Activated B cell treated with CpG ODN at 0.5 μM for 24 hours (primary cell): ENCODE measurements at regions of chr12 and their contacts with region 1.

Region 1: DNA sequence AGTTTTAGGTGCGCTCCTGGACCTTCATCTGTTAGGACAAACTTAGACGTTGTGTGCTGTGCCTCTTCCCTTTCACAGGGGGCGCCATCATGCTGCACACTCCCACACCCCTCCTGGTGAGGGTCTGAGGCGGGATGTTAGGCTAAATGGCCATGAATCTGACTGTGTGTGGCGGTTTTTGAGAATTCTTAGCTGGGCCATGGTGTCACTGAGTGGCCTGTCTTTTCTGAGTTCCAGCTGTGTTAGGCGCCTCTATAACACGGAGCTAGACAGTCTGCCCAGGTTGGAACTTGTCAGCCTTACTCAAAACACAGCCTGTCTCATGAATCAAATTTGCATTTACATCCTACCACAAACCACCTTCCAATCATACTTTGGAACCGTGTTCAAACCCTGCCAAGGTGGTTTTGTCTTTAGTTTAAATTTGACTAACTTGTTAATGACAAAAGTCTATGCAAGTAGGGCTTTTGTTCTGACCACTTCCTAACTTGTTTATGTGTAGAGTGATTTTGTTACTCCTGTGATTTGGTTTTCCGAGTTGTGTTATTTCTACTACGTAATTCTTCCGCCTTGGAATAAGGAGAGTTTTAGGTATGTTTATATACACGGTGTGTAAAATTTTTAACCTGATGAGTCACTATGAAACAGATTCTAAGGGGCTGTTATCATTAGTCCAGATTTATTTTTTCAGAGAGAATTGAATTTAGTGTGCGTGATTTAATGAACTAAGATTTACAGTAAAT is 19.6 kb downstream of the ACVR1B start:
- DNase-seq: peak; percentile 23
- ATAC-seq: peak; percentile 85
- H3K4me3 Mint-ChIP-seq: peak overlapping the region; percentile 69
- H3K27ac Mint-ChIP-seq: peak overlapping the region; percentile 63
- H3K4me1 Mint-ChIP-seq: peaks cover 54% of the 10 kb centered on the region
- H3K27me3 Mint-ChIP-seq: no peaks in the 10 kb centered on the region
- CTCF ChIP-seq: no peak

Region 2: GRCh38 chr12:51056244-51056643 is 914.8 kb before region 1 on chr12:
- CTCF ChIA-PET with region 1: no interaction called
- POLR2A ChIA-PET with region 1: no interaction called
- intact Hi-C with region 1: no loop called
- DNase-seq: no peak
- ATAC-seq: no peak
- H3K4me3 Mint-ChIP-seq: no peak overlapping the region
- H3K27ac Mint-ChIP-seq: no peak overlapping the region
- H3K4me1 Mint-ChIP-seq: no peaks in the 10 kb centered on the region
- H3K27me3 Mint-ChIP-seq: no peaks in the 10 kb centered on the region
- CTCF ChIP-seq: no peak

Region 3: GRCh38 chr12:51951199-51951842 is 19.8 kb before region 1 on chr12 and contains the start of gene ACVR1B:
- CTCF ChIA-PET with region 1: interaction called, 4 read pairs
- POLR2A ChIA-PET with region 1: interaction called, 10 read pairs
- intact Hi-C with region 1: loop called (anchors 1 kb)
- DNase-seq: peak; percentile 74
- ATAC-seq: peak; percentile 95
- H3K4me3 Mint-ChIP-seq: peak within 1 kb of the TSS; percentile 93
- H3K27ac Mint-ChIP-seq: peak within 1 kb of the TSS; percentile 68
- H3K4me1 Mint-ChIP-seq: peaks cover 18% of the 10 kb centered on the region
- H3K27me3 Mint-ChIP-seq: peaks cover 15% of the 10 kb centered on the region
- CTCF ChIP-seq: no peak
- total RNA-seq, gene ACVR1B: 7.8 and 10.0 TPM in 2 replicates